WTC11 (cell line): ENCODE measurements at regions of chr3 and their contacts with region 1.

Region 1: DNA sequence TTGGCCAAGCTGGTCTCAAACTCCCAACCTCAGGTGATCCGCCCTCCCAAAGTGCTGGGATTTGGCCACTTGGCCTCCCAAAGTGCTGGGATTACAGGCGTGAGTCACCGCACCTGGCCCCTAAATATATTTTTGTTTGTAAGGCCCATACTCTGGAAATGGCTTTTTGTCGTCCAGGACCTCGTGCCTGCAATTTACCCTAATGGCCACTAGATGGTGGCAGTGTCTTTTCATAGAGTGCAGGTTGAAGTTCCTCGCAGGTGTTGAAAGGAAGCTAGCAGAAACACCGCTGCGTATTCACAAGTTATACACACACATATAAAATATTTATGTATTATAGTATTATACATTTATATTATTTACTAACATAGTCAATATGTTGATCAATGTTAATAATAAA is 97.2 kb downstream of the LRTM1 start:
- DNase-seq: peak; percentile 64
- ATAC-seq: peak; percentile 66
- H3K4me3 Mint-ChIP-seq: no peak overlapping the region
- H3K27ac Mint-ChIP-seq: no peak overlapping the region
- H3K4me1 Mint-ChIP-seq: peaks cover 6% of the 10 kb centered on the region
- H3K27me3 Mint-ChIP-seq: peaks cover 34% of the 10 kb centered on the region
- CTCF ChIP-seq: peak; percentile 85

Region 2: GRCh38 chr3:54593653-54594052 is 237.0 kb before region 1 on chr3:
- CTCF ChIA-PET with region 1: no interaction called
- POLR2A ChIA-PET with region 1: no interaction called
- DNase-seq: no peak
- ATAC-seq: no peak
- H3K4me3 Mint-ChIP-seq: no peak overlapping the region
- H3K27ac Mint-ChIP-seq: no peak overlapping the region
- H3K4me1 Mint-ChIP-seq: peaks cover 4% of the 10 kb centered on the region
- H3K27me3 Mint-ChIP-seq: no peaks in the 10 kb centered on the region
- CTCF ChIP-seq: no peak

Region 3: GRCh38 chr3:54712539-54712938 is 118.1 kb before region 1 on chr3:
- CTCF ChIA-PET with region 1: no interaction called
- POLR2A ChIA-PET with region 1: no interaction called
- DNase-seq: no peak
- ATAC-seq: no peak
- H3K4me3 Mint-ChIP-seq: no peak overlapping the region
- H3K27ac Mint-ChIP-seq: no peak overlapping the region
- H3K4me1 Mint-ChIP-seq: peaks cover 39% of the 10 kb centered on the region
- H3K27me3 Mint-ChIP-seq: no peaks in the 10 kb centered on the region
- CTCF ChIP-seq: no peak

Region 4: GRCh38 chr3:54850484-54851018 is 19.9 kb after region 1 on chr3:
- CTCF ChIA-PET with region 1: interaction called, 19 read pairs
- POLR2A ChIA-PET with region 1: no interaction called
- DNase-seq: no peak
- ATAC-seq: no peak
- H3K4me3 Mint-ChIP-seq: no peak overlapping the region
- H3K27ac Mint-ChIP-seq: no peak overlapping the region
- H3K4me1 Mint-ChIP-seq: peaks cover 12% of the 10 kb centered on the region
- H3K27me3 Mint-ChIP-seq: no peaks in the 10 kb centered on the region
- CTCF ChIP-seq: no peak

Region 5: GRCh38 chr3:54859184-54859583 is 28.5 kb after region 1 on chr3:
- CTCF ChIA-PET with region 1: interaction called, 20 read pairs
- POLR2A ChIA-PET with region 1: no interaction called
- DNase-seq: no peak
- ATAC-seq: no peak
- H3K4me3 Mint-ChIP-seq: no peak overlapping the region
- H3K27ac Mint-ChIP-seq: no peak overlapping the region
- H3K4me1 Mint-ChIP-seq: peaks cover 61% of the 10 kb centered on the region
- H3K27me3 Mint-ChIP-seq: no peaks in the 10 kb centered on the region
- CTCF ChIP-seq: no peak

Region 6: DNA sequence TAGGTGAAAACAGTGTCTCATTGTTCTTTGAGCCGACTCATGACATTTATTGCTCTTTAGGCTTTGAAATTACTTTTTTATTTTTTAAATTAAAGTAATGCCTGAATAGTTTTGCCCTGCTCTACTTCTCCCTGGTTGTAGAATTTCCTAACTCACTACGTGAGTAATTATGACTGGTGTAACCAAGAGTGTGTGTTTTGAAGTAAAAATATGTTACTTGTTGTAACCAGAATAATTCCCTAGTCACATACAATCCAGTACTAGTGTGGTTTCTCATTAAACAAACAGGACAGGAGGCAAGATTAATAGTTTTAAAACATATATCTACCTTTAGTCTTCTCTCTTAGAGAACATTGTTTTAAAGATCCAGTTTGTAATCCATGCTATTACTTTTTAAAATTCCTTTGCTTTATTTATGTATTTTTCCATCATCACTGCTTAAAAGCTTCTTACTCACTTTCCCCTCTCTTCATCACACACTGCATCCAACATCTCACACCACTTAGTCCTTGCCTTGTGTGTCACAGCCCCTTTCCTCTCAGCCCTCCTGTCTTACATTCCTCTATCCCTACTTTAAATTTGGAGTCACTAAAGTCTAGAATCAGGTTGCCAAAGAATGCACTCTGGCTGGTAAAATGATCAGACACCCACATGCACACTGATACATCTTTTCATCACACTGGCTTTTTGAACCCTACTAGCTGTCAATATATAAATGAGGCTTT is 436.7 kb after region 1 on chr3:
- CTCF ChIA-PET with region 1: no interaction called
- POLR2A ChIA-PET with region 1: no interaction called
- DNase-seq: no peak
- ATAC-seq: no peak
- H3K4me3 Mint-ChIP-seq: no peak overlapping the region
- H3K27ac Mint-ChIP-seq: no peak overlapping the region
- H3K4me1 Mint-ChIP-seq: peaks cover 19% of the 10 kb centered on the region
- H3K27me3 Mint-ChIP-seq: no peaks in the 10 kb centered on the region; the same call in none of the 2 replicates
- CTCF ChIP-seq: no peak

Region 7: GRCh38 chr3:55405436-55405835 is 574.8 kb after region 1 on chr3:
- CTCF ChIA-PET with region 1: interaction called, 11 read pairs
- POLR2A ChIA-PET with region 1: interaction called, 5 read pairs
- DNase-seq: peak; percentile 80
- ATAC-seq: peak; percentile 96
- H3K4me3 Mint-ChIP-seq: no peak overlapping the region
- H3K27ac Mint-ChIP-seq: no peak overlapping the region
- H3K4me1 Mint-ChIP-seq: no peaks in the 10 kb centered on the region
- H3K27me3 Mint-ChIP-seq: no peaks in the 10 kb centered on the region
- CTCF ChIP-seq: peak; percentile 69